PC-9 (cell line): ENCODE measurements at regions of chr12 and their contacts with region 1.

Region 1: GRCh38 chr12:33587870-33588712 is 148.5 kb upstream of the SYT10 start:
- DNase-seq: peak; percentile 66 to 97
- H3K4me3 ChIP-seq: peak overlapping the region; percentile 38; the same call in 1 of the 2 replicates
- H3K27ac ChIP-seq: peak overlapping the region; percentile 96
- H3K4me1 ChIP-seq: peaks cover 50% of the 10 kb centered on the region
- H3K27me3 ChIP-seq: no peaks in the 10 kb centered on the region
- CTCF ChIP-seq: no peak

Region 2: DNA sequence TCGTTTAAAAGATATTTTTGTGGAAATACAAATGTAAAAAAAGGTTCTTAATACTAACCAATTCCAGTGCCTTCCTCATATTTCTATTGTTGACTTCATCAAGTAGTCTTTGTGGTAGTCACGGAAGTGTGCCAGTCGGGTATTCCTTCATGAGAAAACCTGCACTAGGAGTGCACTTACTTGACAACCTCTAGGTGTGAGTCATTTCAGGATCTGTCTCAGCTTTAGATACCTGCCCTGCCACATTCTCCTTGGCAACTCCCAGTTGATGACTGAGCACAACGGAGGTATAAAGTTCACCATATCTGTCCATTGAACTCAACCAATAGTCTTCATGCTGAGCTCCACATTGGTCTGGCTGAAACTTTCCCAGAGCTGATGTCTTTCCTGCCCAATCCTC is 364.2 kb before region 1 on chr12:
- CTCF ChIA-PET with region 1: no interaction called
- POLR2A ChIA-PET with region 1: no interaction called
- intact Hi-C with region 1: loop called (anchors 5 kb)
- DNase-seq: peak; percentile 67 to 96
- H3K4me3 ChIP-seq: no peak overlapping the region
- H3K27ac ChIP-seq: peak overlapping the region; percentile 73
- H3K4me1 ChIP-seq: peaks cover 18% of the 10 kb centered on the region
- H3K27me3 ChIP-seq: no peaks in the 10 kb centered on the region
- CTCF ChIP-seq: no peak

Region 3: DNA sequence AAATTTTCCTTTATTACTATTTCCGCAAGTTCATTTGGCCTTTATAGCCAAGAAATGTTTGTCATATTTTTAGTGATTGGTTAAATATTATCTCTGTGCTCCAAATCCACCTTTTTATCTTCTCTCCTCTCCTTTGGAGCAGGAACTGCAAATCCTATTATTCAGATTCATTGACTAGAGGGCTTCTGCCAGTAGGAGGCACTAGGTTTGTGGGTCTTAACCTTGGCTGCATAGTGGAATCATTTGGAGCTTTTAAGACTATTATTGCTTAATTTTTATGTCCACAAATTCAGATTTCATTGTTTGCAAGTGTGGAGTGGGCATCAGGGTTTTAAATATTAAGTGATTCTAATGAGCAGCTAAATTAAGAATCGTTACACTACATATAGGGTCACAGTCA is 73.2 kb before region 1 on chr12:
- CTCF ChIA-PET with region 1: no interaction called
- POLR2A ChIA-PET with region 1: no interaction called
- intact Hi-C with region 1: loop called (anchors 5 kb)
- DNase-seq: no peak
- H3K4me3 ChIP-seq: no peak overlapping the region
- H3K27ac ChIP-seq: no peak overlapping the region
- H3K4me1 ChIP-seq: peaks cover under 1% of the 10 kb centered on the region; the same call in 1 of the 2 replicates
- H3K27me3 ChIP-seq: no peaks in the 10 kb centered on the region
- CTCF ChIP-seq: no peak

Region 4: GRCh38 chr12:33628093-33628492 is 40.0 kb after region 1 on chr12:
- CTCF ChIA-PET with region 1: no interaction called
- POLR2A ChIA-PET with region 1: no interaction called
- intact Hi-C with region 1: no loop called
- DNase-seq: no peak
- H3K4me3 ChIP-seq: no peak overlapping the region
- H3K27ac ChIP-seq: no peak overlapping the region
- H3K4me1 ChIP-seq: no peaks in the 10 kb centered on the region
- H3K27me3 ChIP-seq: no peaks in the 10 kb centered on the region
- CTCF ChIP-seq: no peak; the same call in 1 of the 2 replicates